CD8-positive, alpha-beta memory T cell (primary cell): ENCODE measurements at regions of chr20 and their contacts with region 1.

Region 1: DNA sequence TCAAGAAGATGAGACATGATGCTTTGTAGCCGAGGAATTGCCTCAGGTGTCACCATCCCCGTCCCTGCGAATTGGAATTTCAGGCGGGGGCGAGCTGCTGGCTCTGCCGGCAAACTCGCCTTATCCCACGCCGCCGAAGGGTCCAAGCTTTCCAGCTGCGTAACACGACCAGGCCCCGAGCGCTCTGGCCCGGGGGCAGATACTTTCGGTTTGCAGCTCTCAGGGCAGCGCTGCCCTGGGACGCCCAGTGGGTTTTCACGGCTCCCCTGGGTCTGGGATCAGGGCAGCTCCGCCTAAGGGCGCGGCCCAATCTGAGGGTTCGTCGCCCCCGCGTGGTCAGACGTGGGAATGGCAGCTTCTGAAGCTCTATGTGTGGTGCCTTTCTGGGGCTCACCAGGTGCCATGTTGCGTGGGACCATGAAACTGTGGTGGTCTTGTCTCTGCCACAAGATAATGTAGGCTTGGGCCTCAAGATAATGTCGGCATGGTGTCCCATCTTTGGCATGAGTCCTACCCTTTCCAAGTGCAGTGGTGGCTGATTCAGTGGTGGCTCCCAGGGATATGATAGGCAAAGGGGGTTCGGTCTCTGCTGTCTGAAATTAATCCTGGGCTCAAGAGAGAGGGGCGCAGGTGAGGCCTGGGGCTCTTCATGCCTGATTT is 20.9 kb downstream of the PIGT start:
- DNase-seq: peak; percentile 78 to 90 (median 84)
- H3K4me3 ChIP-seq: peak overlapping the region; percentile 89
- H3K4me3 Mint-ChIP-seq: peak overlapping the region; percentile 80 to 92 (median 87)
- H3K27ac ChIP-seq: no peak overlapping the region
- H3K27ac Mint-ChIP-seq: peak overlapping the region; percentile 41 to 94 (median 72)
- H3K4me1 ChIP-seq: peaks cover 17% of the 10 kb centered on the region
- H3K4me1 Mint-ChIP-seq: peaks cover 19 to 27% (median 25%) of the 10 kb centered on the region in 3 donors
- H3K27me3 ChIP-seq: no peaks in the 10 kb centered on the region
- H3K27me3 Mint-ChIP-seq: no peaks in the 10 kb centered on the region

Region 2: DNA sequence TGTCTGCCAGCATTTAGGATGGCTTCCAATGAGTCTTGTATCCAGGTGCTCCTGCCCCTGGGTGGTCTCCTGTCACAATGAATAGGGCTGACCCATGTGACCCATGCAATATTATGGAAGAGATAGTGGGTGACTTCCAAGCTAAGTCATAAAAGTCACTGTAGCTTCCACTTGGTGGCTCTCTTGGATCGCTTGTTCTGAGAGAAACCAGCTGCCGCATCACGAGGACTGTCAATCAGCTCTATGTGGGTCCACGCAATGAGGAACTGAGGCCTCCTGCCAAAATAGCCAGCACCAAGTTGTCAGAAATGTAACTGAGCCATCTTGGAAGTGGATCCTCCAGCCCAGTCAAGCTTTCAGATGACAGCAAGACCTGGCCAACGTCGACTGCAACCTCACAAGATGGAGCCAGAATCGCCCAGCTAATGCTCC is 113.9 kb before region 1 on chr20:
- CTCF ChIA-PET with region 1: interaction called, 70 read pairs
- POLR2A ChIA-PET with region 1: interaction called, 3 read pairs
- DNase-seq: no peak
- H3K4me3 ChIP-seq: no peak overlapping the region
- H3K4me3 Mint-ChIP-seq: no peak overlapping the region
- H3K27ac ChIP-seq: no peak overlapping the region
- H3K27ac Mint-ChIP-seq: peak overlapping the region in 1 of 8 donors; percentile 89
- H3K4me1 ChIP-seq: peaks cover 26% of the 10 kb centered on the region
- H3K4me1 Mint-ChIP-seq: peaks cover 20 to 25% (median 22%) of the 10 kb centered on the region in 3 donors
- H3K27me3 ChIP-seq: no peaks in the 10 kb centered on the region
- H3K27me3 Mint-ChIP-seq: no peaks in the 10 kb centered on the region

Region 3: DNA sequence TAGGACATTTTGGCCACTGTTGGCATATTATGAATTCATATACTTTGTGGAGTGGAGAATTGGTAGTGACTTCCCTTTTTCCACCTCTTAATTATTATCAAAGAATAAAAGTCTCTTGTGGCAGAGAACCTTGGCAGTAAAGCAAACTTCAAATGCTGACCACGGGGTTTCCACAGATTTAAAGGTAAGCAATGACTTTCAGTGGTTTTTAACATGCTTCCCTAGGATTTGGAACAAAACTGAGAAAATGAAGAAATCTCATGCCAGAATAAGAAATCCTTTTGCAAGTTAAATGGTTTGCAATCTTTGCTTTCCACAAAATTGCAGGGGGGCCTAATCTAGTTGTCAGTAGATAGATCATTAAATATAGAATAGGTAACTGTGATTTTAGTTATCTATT is 86.6 kb before region 1 on chr20:
- CTCF ChIA-PET with region 1: interaction called, 10 read pairs
- POLR2A ChIA-PET with region 1: no interaction called
- DNase-seq: no peak
- H3K4me3 ChIP-seq: no peak overlapping the region
- H3K4me3 Mint-ChIP-seq: peak overlapping the region in 1 of 7 donors; percentile 43
- H3K27ac ChIP-seq: no peak overlapping the region
- H3K27ac Mint-ChIP-seq: no peak overlapping the region
- H3K4me1 ChIP-seq: peaks cover 8% of the 10 kb centered on the region
- H3K4me1 Mint-ChIP-seq: peaks cover 15 to 29% (median 18%) of the 10 kb centered on the region in 3 donors
- H3K27me3 ChIP-seq: no peaks in the 10 kb centered on the region
- H3K27me3 Mint-ChIP-seq: peaks cover 2 to 3% of the 10 kb centered on the region in 2 donors

Region 4: GRCh38 chr20:45373353-45374100 is 63.3 kb before region 1 on chr20:
- CTCF ChIA-PET with region 1: interaction called, 183 read pairs
- POLR2A ChIA-PET with region 1: interaction called, 16 read pairs
- DNase-seq: peak; percentile 80 to 91 (median 85)
- H3K4me3 ChIP-seq: peak overlapping the region; percentile 79
- H3K4me3 Mint-ChIP-seq: peak overlapping the region; percentile 84 to 94 (median 86)
- H3K27ac ChIP-seq: peak overlapping the region; percentile 39
- H3K27ac Mint-ChIP-seq: peak overlapping the region; percentile 78 to 98 (median 94)
- H3K4me1 ChIP-seq: peaks cover 13% of the 10 kb centered on the region
- H3K4me1 Mint-ChIP-seq: peaks cover 30 to 47% (median 33%) of the 10 kb centered on the region in 3 donors
- H3K27me3 ChIP-seq: no peaks in the 10 kb centered on the region
- H3K27me3 Mint-ChIP-seq: no peaks in the 10 kb centered on the region

Region 5: GRCh38 chr20:45415774-45416637 is 20.9 kb before region 1 on chr20 and contains the start of gene PIGT:
- CTCF ChIA-PET with region 1: interaction called, 23 read pairs
- POLR2A ChIA-PET with region 1: interaction called, 5 read pairs
- DNase-seq: peak; percentile 85 to 95 (median 94)
- H3K4me3 ChIP-seq: peak within 1 kb of the TSS; percentile 86
- H3K4me3 Mint-ChIP-seq: peak within 1 kb of the TSS; percentile 94 to 99 (median 97)
- H3K27ac ChIP-seq: peak within 1 kb of the TSS; percentile 64
- H3K27ac Mint-ChIP-seq: peak within 1 kb of the TSS; percentile 96 to 99 (median 98)
- H3K4me1 ChIP-seq: peaks cover 21% of the 10 kb centered on the region
- H3K4me1 Mint-ChIP-seq: peaks cover 36 to 54% (median 50%) of the 10 kb centered on the region in 3 donors
- H3K27me3 ChIP-seq: no peaks in the 10 kb centered on the region
- H3K27me3 Mint-ChIP-seq: no peaks in the 10 kb centered on the region
- total RNA-seq, gene PIGT: 76.3 to 76.4 TPM

Region 6: GRCh38 chr20:45771182-45771759 is 334.4 kb after region 1 on chr20:
- CTCF ChIA-PET with region 1: interaction called, 12 read pairs
- POLR2A ChIA-PET with region 1: no interaction called
- DNase-seq: peak; percentile 64 to 81 (median 69)
- H3K4me3 ChIP-seq: no peak overlapping the region
- H3K4me3 Mint-ChIP-seq: no peak overlapping the region
- H3K27ac ChIP-seq: no peak overlapping the region
- H3K27ac Mint-ChIP-seq: peak overlapping the region in 2 of 8 donors; percentile 26 to 71
- H3K4me1 ChIP-seq: no peaks in the 10 kb centered on the region
- H3K4me1 Mint-ChIP-seq: peaks cover 3 to 4% (median 4%) of the 10 kb centered on the region in 3 donors
- H3K27me3 ChIP-seq: no peaks in the 10 kb centered on the region
- H3K27me3 Mint-ChIP-seq: peaks cover 14 to 20% of the 10 kb centered on the region in 2 donors